ENCODE measurements at regions of chr10 and their contacts with region 1.

Region 1: GRCh38 chr10:48363617-48364355 is 57.3 kb downstream of the MAPK8 start:
- DNase-seq: peak in 1 of 2 donors; percentile 19
- H3K4me3 ChIP-seq: no peak overlapping the region
- H3K27ac ChIP-seq: peak overlapping the region in 1 of 2 donors; percentile 15
- H3K4me1 ChIP-seq: peaks cover 0 to 11% of the 10 kb centered on the region in 2 donors
- H3K27me3 ChIP-seq: no peaks in the 10 kb centered on the region
- CTCF ChIP-seq: peak; percentile 63 to 78 (median 68)
- POLR2A ChIP-seq: no peak

Region 2: DNA sequence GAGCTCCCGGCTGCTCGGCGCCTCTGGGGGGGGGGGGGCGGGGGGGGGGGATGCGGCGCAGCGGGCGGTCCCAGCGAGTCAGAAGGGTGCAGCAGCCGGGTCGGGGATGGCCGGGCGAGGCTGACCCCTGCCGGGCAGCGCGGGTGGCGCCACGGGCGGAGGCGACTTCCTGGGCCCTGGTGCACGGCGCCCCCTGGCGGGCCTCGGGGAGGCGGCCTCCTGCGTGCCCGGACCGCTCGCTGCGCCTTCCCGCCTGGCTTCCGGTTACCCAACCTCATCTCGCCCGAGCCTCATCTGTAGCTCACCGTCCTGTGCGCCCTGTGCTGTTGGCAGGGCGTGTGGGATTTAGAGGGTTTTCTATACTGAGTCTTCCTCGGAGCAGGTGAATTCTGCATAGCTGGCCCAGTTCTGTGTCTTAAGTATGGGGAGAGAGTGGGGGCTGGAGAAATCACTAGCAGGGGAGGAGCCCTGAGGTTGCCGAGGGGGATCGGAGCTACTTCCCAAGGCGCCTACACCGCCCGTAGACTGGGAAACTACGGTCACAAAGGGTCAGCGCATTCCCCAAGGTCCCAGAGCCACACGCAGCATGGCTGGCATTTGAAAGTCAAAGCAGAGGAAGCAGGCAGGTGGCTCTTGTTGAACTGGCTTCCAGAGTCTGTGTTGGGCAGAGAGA is 292.6 kb after region 1 on chr10:
- intact Hi-C with region 1: loop called (anchors 10 kb)
- DNase-seq: peak; percentile 74 to 89
- H3K4me3 ChIP-seq: peak overlapping the region; percentile 14 to 40
- H3K27ac ChIP-seq: peak overlapping the region in 1 of 2 donors; percentile 0
- H3K4me1 ChIP-seq: peaks cover 0 to 4% of the 10 kb centered on the region in 2 donors
- H3K27me3 ChIP-seq: no peaks in the 10 kb centered on the region
- CTCF ChIP-seq: peak; percentile 75 to 98 (median 94)
- POLR2A ChIP-seq: no peak

Region 3: DNA sequence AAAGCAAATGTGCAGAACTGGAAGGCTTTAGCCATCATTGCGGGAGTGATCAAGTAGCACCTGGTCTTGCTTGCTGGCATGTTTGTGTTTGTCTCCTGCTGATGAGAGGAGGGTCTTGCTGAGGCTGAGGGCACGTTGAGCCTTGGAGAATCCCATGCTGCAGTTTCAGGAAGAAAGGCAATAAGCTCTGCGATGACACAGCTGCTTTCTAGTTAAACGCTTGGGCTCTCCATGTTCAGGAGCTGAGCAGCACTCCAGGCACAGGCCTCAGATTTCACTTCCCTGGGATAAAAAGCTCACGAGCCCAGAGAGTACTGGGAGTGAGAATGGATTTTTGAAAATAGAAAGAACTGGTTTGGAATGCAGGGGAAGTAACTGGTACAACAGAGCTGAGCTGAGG is 475.0 kb after region 1 on chr10:
- intact Hi-C with region 1: no loop called
- DNase-seq: no peak
- H3K4me3 ChIP-seq: no peak overlapping the region
- H3K27ac ChIP-seq: no peak overlapping the region
- H3K4me1 ChIP-seq: no peaks in the 10 kb centered on the region
- H3K27me3 ChIP-seq: no peaks in the 10 kb centered on the region
- CTCF ChIP-seq: no peak
- POLR2A ChIP-seq: no peak

Measured in uterus (tissue), 4 donors.